PC-9 (cell line): ENCODE measurements at regions of chr3 and their contacts with region 1.

Region 1: DNA sequence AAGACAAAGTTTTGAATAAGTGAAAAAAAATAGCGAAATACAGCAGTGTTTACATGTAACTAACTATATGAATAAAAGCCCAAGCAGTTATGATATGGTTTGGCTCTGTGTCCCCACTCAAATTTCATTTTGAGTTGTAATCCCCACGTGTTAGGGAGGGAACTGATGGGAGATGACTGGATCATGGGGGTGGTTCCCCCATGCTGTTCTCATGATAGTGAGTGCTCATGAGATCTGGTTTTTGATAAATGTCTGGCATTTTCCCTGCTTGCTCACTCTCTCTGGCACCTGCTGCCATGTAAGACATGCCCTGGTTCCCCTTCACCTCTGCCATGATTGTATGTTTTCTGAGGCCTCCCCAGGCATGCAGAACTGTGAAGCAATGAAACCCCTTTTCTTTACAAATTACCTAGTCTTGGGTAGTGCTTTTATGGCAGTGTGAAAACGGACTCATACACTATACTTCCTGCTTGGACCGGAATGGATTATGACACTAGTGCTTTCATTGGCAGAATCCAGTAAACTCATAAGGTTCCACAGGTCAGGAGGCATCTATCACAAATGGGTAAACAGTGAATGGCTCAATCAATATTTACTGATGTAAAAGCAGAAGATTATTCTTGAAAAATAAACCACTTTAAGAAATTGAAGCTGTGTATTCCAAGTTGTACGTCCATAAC is 192.1 kb downstream of the CBLB start:
- DNase-seq: no peak
- H3K4me3 ChIP-seq: no peak overlapping the region
- H3K27ac ChIP-seq: no peak overlapping the region
- H3K4me1 ChIP-seq: no peaks in the 10 kb centered on the region
- H3K27me3 ChIP-seq: no peaks in the 10 kb centered on the region
- CTCF ChIP-seq: no peak

Region 2: GRCh38 chr3:105822171-105823123 is 145.7 kb after region 1 on chr3:
- CTCF ChIA-PET with region 1: no interaction called
- POLR2A ChIA-PET with region 1: interaction called, 21 read pairs
- intact Hi-C with region 1: no loop called
- DNase-seq: no peak
- H3K4me3 ChIP-seq: no peak overlapping the region
- H3K27ac ChIP-seq: no peak overlapping the region
- H3K4me1 ChIP-seq: peaks cover 16% of the 10 kb centered on the region
- H3K27me3 ChIP-seq: no peaks in the 10 kb centered on the region
- CTCF ChIP-seq: no peak